PC-3 (cell line): ENCODE measurements at regions of chr17 and their contacts with region 1.

Region 1: GRCh38 chr17:53264730-53265129 is 558.0 kb upstream of the KIF2B start:
- DNase-seq: no peak
- ATAC-seq: no peak
- H3K4me3 ChIP-seq: no peak overlapping the region
- H3K27ac ChIP-seq: no peak overlapping the region
- H3K4me1 ChIP-seq: no peaks in the 10 kb centered on the region
- H3K27me3 ChIP-seq: no peaks in the 10 kb centered on the region
- CTCF ChIP-seq: no peak

Region 2: DNA sequence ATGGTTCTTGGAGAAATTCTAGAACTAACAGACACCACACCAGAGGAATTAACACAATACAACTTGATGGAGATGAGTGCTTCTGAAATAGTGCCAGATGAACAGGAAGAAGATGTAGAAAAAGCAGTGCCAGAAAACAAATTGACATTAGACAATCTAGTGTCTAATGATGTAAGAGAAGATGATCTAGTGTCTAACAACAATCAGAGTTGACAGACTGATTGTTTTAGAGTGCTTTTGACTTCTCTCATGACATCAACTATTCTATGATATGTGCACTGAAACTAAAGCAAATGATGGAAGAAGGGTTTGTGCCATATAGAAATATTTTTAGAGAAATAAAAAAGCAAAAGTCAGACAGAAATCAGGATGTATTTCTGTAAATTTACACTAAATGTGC is 88.1 kb before region 1 on chr17:
- CTCF ChIA-PET with region 1: no interaction called
- POLR2A ChIA-PET with region 1: no interaction called
- intact Hi-C with region 1: no loop called
- DNase-seq: no peak
- ATAC-seq: no peak
- H3K4me3 ChIP-seq: no peak overlapping the region
- H3K27ac ChIP-seq: no peak overlapping the region
- H3K4me1 ChIP-seq: no peaks in the 10 kb centered on the region
- H3K27me3 ChIP-seq: no peaks in the 10 kb centered on the region
- CTCF ChIP-seq: no peak

Region 3: GRCh38 chr17:53217311-53217710 is 47.4 kb before region 1 on chr17:
- CTCF ChIA-PET with region 1: no interaction called
- POLR2A ChIA-PET with region 1: no interaction called
- intact Hi-C with region 1: no loop called
- DNase-seq: peak; percentile 31
- ATAC-seq: no peak
- H3K4me3 ChIP-seq: no peak overlapping the region
- H3K27ac ChIP-seq: no peak overlapping the region
- H3K4me1 ChIP-seq: no peaks in the 10 kb centered on the region
- H3K27me3 ChIP-seq: no peaks in the 10 kb centered on the region
- CTCF ChIP-seq: no peak

Region 4: GRCh38 chr17:53278466-53278865 is 13.7 kb after region 1 on chr17:
- CTCF ChIA-PET with region 1: no interaction called
- POLR2A ChIA-PET with region 1: no interaction called
- intact Hi-C with region 1: no loop called
- DNase-seq: no peak
- ATAC-seq: no peak
- H3K4me3 ChIP-seq: no peak overlapping the region
- H3K27ac ChIP-seq: no peak overlapping the region
- H3K4me1 ChIP-seq: no peaks in the 10 kb centered on the region
- H3K27me3 ChIP-seq: no peaks in the 10 kb centered on the region
- CTCF ChIP-seq: no peak

Region 5: DNA sequence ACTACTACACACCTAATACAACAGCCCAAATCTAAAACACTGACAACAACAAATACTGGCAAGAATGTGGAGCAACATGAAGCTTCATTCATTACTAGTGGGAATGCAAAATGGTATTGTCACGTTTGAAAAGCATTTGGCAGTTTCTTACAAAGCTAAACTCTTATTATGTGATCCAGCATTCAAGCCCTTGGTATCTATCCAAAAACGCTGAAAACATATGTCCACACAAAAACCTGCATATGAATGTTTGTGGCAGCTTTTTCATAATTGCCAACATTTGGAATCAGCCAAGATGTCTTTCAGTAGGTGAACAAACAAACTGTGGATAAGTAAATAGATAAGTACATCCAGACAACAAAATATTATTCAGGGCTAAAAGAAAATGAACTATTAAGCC is 56.9 kb after region 1 on chr17:
- CTCF ChIA-PET with region 1: no interaction called
- POLR2A ChIA-PET with region 1: no interaction called
- intact Hi-C with region 1: loop called (anchors 10 kb)
- DNase-seq: no peak
- ATAC-seq: no peak
- H3K4me3 ChIP-seq: no peak overlapping the region
- H3K27ac ChIP-seq: no peak overlapping the region
- H3K4me1 ChIP-seq: no peaks in the 10 kb centered on the region
- H3K27me3 ChIP-seq: no peaks in the 10 kb centered on the region
- CTCF ChIP-seq: no peak